ENCODE measurements at regions of chrX and their contacts with region 1.

Region 1: DNA sequence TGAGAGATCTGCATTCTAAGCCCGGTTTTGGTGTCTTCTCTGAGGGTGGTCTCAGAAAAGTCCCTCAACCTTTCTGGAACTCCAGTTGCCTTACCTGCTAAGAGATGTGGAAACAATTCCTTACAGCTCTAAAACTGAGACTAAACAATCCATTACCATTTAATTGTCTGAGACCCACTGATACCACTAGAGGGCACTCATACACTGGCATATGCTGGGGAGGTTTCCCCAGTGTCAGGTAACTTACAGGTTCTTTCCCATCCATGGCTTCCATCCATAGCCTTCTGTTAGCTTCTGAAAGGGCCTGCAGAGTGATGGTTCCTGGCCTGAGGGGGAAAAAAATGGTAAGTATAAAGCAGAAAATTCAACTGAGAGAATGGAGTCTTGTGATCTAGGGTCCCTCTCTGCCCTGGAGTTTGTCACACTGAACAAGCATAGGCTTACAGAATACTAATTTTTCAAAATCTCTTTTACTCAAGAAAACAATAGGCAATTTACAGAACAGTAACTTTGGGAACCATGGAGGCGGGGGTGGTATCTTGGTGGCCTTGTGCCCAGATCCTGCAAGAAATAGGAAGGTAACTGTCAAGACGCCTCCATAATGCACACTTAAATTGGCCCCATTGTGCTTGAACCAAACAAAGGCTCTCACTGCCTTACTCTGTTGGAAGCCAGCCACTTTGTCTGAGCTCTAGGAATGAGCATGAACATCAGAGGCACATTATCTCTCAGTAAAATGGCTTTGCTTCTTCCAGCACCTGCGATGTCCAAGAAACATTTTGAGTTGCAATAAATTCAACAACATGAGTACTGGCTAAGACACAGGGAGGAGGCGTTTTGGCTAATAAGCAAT is 236.1 kb downstream of the OPHN1 start:
- DNase-seq: peak; percentile 54
- H3K4me3 ChIP-seq: no peak overlapping the region
- H3K27ac ChIP-seq: no peak overlapping the region
- H3K4me1 ChIP-seq: no peaks in the 10 kb centered on the region
- H3K27me3 ChIP-seq: no peaks in the 10 kb centered on the region

Region 2: GRCh38 chrX:68045008-68045577 is 152.1 kb before region 1 on chrX:
- in situ Hi-C with region 1: no loop called
- DNase-seq: peak; percentile 4
- H3K4me3 ChIP-seq: no peak overlapping the region
- H3K27ac ChIP-seq: no peak overlapping the region
- H3K4me1 ChIP-seq: no peaks in the 10 kb centered on the region
- H3K27me3 ChIP-seq: no peaks in the 10 kb centered on the region

Region 3: GRCh38 chrX:68462653-68463052 is 265.5 kb after region 1 on chrX:
- in situ Hi-C with region 1: loop called (anchors 10 kb)
- DNase-seq: peak; percentile 52
- H3K4me3 ChIP-seq: no peak overlapping the region
- H3K27ac ChIP-seq: peak overlapping the region; percentile 75
- H3K4me1 ChIP-seq: peaks cover 15% of the 10 kb centered on the region
- H3K27me3 ChIP-seq: no peaks in the 10 kb centered on the region

Measured in GM23248 (cell line).